Mammary epithelial cell (primary cell): ENCODE measurements at regions of chr12 and their contacts with region 1.

Region 1: DNA sequence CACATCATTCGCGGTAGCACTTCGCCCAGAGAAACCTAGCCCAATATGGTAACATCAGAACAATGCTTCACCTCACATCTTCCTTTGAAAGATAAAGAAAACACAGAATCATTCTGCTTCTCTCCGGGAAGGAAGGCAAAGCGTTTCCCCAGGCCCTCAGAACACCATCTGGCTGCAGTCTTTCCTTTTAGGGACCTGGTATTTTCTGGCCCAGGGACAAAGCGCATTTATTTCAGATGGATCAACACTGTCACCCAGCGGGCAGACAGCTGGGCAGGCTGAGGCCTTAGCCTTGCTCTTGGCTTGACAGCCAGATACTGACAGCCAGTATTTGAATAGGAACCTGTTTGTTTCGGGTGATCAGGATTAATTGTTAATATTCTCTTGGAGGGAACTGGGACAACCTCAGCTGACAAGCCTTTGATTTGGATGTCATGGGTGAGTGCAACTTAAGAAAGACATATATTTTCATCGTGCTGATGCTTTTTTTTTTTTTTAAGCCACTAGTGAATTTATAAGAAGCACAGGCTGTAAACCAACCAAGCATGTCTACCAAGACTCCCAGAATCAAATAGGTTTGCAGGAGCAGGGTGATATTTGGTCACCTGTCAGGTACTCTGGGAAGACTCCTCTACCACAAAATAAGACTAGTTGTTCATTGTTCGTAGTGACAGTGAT is 118.9 kb downstream of the VEZT start:
- DNase-seq: peak; percentile 61
- H3K4me3 ChIP-seq: no peak overlapping the region
- H3K27ac ChIP-seq: no peak overlapping the region
- H3K4me1 ChIP-seq: peaks cover 6% of the 10 kb centered on the region
- H3K27me3 ChIP-seq: no peaks in the 10 kb centered on the region
- CTCF ChIP-seq: peak; percentile 88 to 90

Region 2: GRCh38 chr12:94133964-94134795 is 1202.3 kb before region 1 on chr12:
- CTCF ChIA-PET with region 1: no interaction called
- dilution Hi-C with region 1: no loop called
- in situ Hi-C with region 1: no loop called
- intact Hi-C with region 1: loop called (anchors 5 kb)
- DNase-seq: peak; percentile 36
- H3K4me3 ChIP-seq: no peak overlapping the region
- H3K27ac ChIP-seq: no peak overlapping the region
- H3K4me1 ChIP-seq: no peaks in the 10 kb centered on the region
- H3K27me3 ChIP-seq: no peaks in the 10 kb centered on the region
- CTCF ChIP-seq: peak; percentile 58 to 71

Region 3: DNA sequence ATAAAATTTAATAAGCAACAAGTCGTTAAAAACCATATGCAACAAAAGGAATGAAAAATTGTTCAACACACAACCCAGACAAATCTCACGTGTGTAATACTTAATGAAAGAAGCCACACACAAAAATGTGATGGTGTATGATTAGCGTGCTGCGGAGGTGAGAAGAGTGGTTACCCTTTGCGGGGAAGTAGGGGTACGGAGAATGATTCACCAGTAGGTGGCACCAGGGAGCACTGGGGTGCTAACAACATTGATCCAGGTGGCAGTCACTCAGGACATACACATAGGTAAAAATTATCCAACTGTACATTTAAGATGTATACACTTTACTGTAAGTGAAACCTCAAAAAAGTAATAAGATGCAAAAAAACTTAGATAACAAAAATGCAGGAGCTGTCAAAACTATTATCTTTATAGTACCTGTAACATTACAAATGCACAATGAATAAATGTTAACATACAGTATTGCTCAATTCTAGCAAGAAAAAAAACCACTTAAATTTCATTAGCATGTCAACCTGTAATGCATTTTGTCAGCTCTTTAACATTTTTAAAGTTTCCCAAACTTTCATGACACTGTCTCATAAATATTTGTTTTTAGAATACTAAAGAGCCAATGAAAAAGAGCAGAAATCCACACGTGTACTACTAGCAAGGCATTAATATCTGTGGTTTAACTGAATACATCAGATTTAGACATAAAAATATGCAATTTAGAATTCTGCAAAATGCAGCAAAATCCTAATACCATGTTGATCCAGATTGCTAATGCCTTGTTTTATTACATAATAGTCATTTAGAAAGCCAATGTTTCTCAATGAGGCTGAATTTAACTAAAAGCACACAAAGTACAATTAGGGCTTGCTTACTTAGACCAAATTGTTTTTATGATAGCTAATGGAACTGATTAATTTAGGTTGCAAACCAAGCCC is 732.8 kb before region 1 on chr12:
- CTCF ChIA-PET with region 1: no interaction called
- dilution Hi-C with region 1: no loop called
- in situ Hi-C with region 1: no loop called
- intact Hi-C with region 1: loop called (anchors 5 kb)
- DNase-seq: no peak
- H3K4me3 ChIP-seq: no peak overlapping the region
- H3K27ac ChIP-seq: no peak overlapping the region
- H3K4me1 ChIP-seq: peaks cover 6% of the 10 kb centered on the region
- H3K27me3 ChIP-seq: no peaks in the 10 kb centered on the region
- CTCF ChIP-seq: peak; percentile 62 to 83

Region 4: GRCh38 chr12:95117178-95117599 is 219.3 kb before region 1 on chr12:
- CTCF ChIA-PET with region 1: interaction called, 11 read pairs
- dilution Hi-C with region 1: no loop called
- in situ Hi-C with region 1: no loop called
- intact Hi-C with region 1: loop called (anchors 1 kb)
- DNase-seq: no peak
- H3K4me3 ChIP-seq: peak overlapping the region in 1 of 3 experiments; percentile 56
- H3K27ac ChIP-seq: peak overlapping the region; percentile 99
- H3K4me1 ChIP-seq: peaks cover 44% of the 10 kb centered on the region
- H3K27me3 ChIP-seq: no peaks in the 10 kb centered on the region
- CTCF ChIP-seq: peak; percentile 67 to 71

Region 5: DNA sequence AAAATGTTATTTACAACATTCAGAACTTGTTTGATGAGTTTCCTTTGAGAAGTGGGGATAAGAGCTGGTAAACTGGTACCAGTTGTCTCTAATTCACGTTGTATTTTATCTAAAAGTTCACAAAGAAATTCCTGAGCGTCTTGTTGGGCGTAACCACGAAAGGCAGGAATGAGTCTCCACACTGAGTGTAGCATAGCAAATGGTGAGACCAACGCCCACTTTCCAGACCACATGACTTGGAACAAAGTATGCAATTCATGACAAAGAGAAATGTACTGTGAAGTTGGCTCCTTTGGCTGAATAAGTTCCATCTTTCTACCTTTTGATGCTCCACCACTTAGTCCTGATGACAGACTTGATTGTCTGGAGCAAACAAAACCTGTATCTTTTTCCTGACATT is 196.3 kb after region 1 on chr12:
- CTCF ChIA-PET with region 1: interaction called, 3 read pairs
- dilution Hi-C with region 1: no loop called
- in situ Hi-C with region 1: no loop called
- intact Hi-C with region 1: loop called (anchors 1 kb)
- DNase-seq: peak; percentile 62
- H3K4me3 ChIP-seq: no peak overlapping the region
- H3K27ac ChIP-seq: no peak overlapping the region
- H3K4me1 ChIP-seq: peaks cover 5% of the 10 kb centered on the region
- H3K27me3 ChIP-seq: no peaks in the 10 kb centered on the region
- CTCF ChIP-seq: no peak